Astrocyte of the spinal cord (primary cell): ENCODE measurements at regions of chr6 and their contacts with region 1.

Region 1: DNA sequence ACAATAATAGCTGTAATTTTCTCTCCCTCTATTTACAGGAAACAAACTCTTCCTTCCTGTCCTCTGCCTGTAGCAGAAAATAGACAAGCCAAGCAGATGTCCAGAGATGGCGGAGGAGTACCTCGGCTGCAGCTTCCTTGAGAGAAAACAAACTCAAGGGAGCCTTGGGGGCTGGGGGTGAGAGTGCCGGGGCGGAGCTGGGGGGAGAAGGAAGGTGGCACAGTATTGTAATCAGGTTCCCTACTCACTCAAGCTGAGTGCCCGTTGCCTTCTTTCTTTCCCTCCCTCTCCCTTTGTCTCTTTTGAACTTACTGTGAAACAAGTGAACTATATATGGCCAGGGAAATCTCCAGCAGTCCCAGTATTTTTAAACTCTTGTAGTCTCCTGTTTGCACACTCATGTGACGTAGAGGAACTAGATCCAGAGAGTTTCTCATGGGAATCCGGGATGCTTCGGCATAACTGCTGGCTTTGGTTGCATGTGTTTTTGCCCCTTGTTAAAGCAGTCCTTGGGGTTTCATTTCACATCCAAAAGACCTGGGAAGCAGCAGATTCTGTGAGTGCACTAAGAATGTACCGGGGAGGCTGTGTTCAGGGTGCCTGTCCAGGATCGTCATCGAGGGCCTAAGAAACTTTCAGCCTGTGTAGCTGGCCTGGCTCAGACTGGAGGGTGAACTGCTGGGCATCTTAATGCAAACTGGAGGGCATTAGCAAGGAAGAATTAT is 44.6 kb upstream of the HDDC2 start:
- DNase-seq: peak; percentile 9
- H3K4me3 ChIP-seq: no peak overlapping the region
- CTCF ChIP-seq: no peak

Region 2: GRCh38 chr6:125753218-125753936 is 407.0 kb after region 1 on chr6:
- in situ Hi-C with region 1: loop called (anchors 25 kb)
- DNase-seq: peak; percentile 56
- H3K4me3 ChIP-seq: no peak overlapping the region
- CTCF ChIP-seq: peak; percentile 20